ENCODE measurements at regions of chr15 and their contacts with region 1.

Region 1: GRCh38 chr15:52256366-52256765 is 39.2 kb downstream of the MYO5C start:
- DNase-seq: peak in 1 of 2 experiments; percentile 55
- H3K4me3 ChIP-seq: no peak overlapping the region
- H3K27ac ChIP-seq: no peak overlapping the region
- H3K4me1 ChIP-seq: peaks cover 32% of the 10 kb centered on the region
- H3K27me3 ChIP-seq: no peaks in the 10 kb centered on the region
- CTCF ChIP-seq: peak; percentile 77

Region 2: DNA sequence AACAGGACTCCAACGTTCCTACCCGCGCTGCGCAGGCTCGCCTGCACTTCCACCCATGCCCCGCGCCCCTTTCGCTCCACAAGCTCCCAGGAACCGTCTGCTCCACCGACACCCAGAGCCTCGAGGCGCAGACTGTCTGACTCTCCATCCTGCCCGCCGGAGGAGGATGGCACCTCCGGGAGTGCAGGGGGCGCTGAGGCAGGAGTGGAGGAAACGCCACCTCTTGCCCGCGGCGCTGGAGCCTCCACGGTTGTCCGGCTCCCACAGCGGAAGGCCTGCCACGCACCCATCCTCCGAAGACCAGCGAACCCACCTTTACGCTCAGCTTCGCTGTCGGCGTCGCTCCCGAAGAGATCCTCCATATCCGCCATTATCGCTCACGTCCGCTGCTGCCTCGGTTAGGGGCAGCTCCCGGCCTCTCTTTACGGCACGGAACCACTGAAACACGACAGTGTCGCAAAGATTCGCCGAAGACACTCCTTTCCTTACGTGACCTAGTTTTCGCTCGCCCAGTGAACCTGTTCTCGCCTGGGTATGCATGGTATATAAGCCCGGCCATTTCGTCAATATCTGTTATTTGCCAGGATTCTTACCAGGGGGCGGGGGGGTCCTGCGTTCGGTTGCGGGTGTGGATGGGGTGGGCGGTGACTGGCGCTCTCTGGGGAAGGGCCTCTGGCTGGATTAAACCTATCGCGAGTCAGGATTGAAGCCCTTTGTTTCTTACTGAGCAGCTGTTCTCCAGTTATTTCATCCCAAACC is 284.8 kb before region 1 on chr15 and contains the start of gene LEO1:
- CTCF ChIA-PET with region 1: no interaction called
- POLR2A ChIA-PET with region 1: interaction called, 15 read pairs
- intact Hi-C with region 1: no loop called
- DNase-seq: peak; percentile 82 to 86
- H3K4me3 ChIP-seq: peak within 1 kb of the TSS; percentile 71
- H3K27ac ChIP-seq: peak within 1 kb of the TSS; percentile 59
- H3K4me1 ChIP-seq: peaks cover 23% of the 10 kb centered on the region
- H3K27me3 ChIP-seq: no peaks in the 10 kb centered on the region
- CTCF ChIP-seq: no peak; the same call in 1 of the 2 replicates
- total RNA-seq, gene LEO1: 18.2 and 21.7 TPM in 2 replicates

Region 3: GRCh38 chr15:52324109-52324508 is 67.7 kb after region 1 on chr15:
- CTCF ChIA-PET with region 1: interaction called, 8 read pairs
- POLR2A ChIA-PET with region 1: interaction called, 24 read pairs
- intact Hi-C with region 1: no loop called
- DNase-seq: no peak
- H3K4me3 ChIP-seq: no peak overlapping the region
- H3K27ac ChIP-seq: no peak overlapping the region
- H3K4me1 ChIP-seq: no peaks in the 10 kb centered on the region
- H3K27me3 ChIP-seq: no peaks in the 10 kb centered on the region
- CTCF ChIP-seq: no peak

Region 4: GRCh38 chr15:52528991-52529926 is 272.9 kb after region 1 on chr15:
- CTCF ChIA-PET with region 1: no interaction called
- POLR2A ChIA-PET with region 1: no interaction called
- intact Hi-C with region 1: loop called (anchors 5 kb)
- DNase-seq: peak in 1 of 2 experiments; percentile 62
- H3K4me3 ChIP-seq: peak overlapping the region; percentile 68; the same call in 1 of the 2 replicates
- H3K27ac ChIP-seq: no peak overlapping the region
- H3K4me1 ChIP-seq: no peaks in the 10 kb centered on the region
- H3K27me3 ChIP-seq: no peaks in the 10 kb centered on the region
- CTCF ChIP-seq: no peak

Region 5: GRCh38 chr15:52568601-52569256 is 312.4 kb after region 1 on chr15 and contains the start of gene ARPP19:
- CTCF ChIA-PET with region 1: no interaction called
- POLR2A ChIA-PET with region 1: no interaction called
- intact Hi-C with region 1: loop called (anchors 1 kb)
- DNase-seq: peak; percentile 77 to 88
- H3K4me3 ChIP-seq: peak within 1 kb of the TSS; percentile 94
- H3K27ac ChIP-seq: peak within 1 kb of the TSS; percentile 84
- H3K4me1 ChIP-seq: peaks cover 15% of the 10 kb centered on the region
- H3K27me3 ChIP-seq: no peaks in the 10 kb centered on the region
- CTCF ChIP-seq: no peak
- total RNA-seq, gene ARPP19: 108 and 119 TPM in 2 replicates

Region 6: DNA sequence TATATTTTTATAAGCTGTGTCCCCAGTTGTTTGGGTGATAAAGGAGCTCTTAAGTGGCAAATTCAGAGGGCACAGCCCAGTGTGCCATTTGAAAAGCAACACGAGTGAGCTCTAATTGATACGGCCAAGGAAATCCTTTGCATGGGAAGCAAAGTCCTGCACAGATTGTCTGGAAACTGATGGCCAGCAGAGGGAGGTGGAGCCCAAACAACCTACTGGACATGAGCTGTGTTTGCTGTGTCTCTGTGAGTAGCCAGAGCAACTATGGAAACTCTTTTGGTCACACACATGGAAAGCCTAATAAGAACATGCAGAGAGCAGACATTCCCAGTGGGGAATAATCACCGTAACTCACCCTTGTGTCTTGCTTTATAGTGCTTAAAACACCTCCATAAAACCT is 509.4 kb after region 1 on chr15:
- CTCF ChIA-PET with region 1: no interaction called
- POLR2A ChIA-PET with region 1: interaction called, 11 read pairs
- intact Hi-C with region 1: no loop called
- DNase-seq: no peak
- H3K4me3 ChIP-seq: no peak overlapping the region
- H3K27ac ChIP-seq: no peak overlapping the region
- H3K4me1 ChIP-seq: no peaks in the 10 kb centered on the region
- H3K27me3 ChIP-seq: peaks cover 33% of the 10 kb centered on the region; the same call in 1 of the 2 replicates
- CTCF ChIP-seq: peak; percentile 35; the same call in 1 of the 2 replicates

Measured in PC-9 (cell line).